ENCODE measurements at regions of chr17 and their contacts with region 1.

Region 1: GRCh38 chr17:74212913-74213791 is at the start of gene TTYH2:
- DNase-seq: peak; percentile 93
- ATAC-seq: peak; percentile 65
- H3K4me3 ChIP-seq: peak within 1 kb of the TSS; percentile 72
- H3K27ac ChIP-seq: peak within 1 kb of the TSS; percentile 48
- H3K4me1 ChIP-seq: peaks cover 36% of the 10 kb centered on the region
- H3K27me3 ChIP-seq: no peaks in the 10 kb centered on the region
- CTCF ChIP-seq: peak; percentile 57; the same call in 1 of the 2 replicates
- total RNA-seq, gene TTYH2: 17.6 and 21.0 TPM in 2 replicates

Region 2: DNA sequence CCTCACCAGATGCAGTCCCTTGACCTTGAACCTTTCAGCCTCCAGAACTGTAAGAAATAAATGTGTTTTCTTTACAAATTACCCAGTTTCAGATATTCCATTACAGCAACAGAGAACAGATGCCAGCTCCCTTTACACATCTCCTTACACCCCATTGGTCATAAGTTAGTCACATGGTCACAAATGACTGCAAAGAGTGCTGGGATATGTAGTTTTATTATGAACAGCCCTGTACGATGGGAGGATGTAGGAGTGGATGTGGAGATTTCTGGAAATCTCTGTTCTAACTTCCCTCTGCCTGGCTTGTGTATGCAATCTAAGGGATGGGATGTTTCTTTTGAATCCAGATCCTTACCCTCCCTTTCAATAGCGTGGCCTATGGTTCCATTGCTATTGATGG is 23.0 kb before region 1 on chr17:
- CTCF ChIA-PET with region 1: no interaction called
- POLR2A ChIA-PET with region 1: interaction called, 18 read pairs
- intact Hi-C with region 1: no loop called
- DNase-seq: peak; percentile 50
- ATAC-seq: peak; percentile 44; the same call in 1 of the 2 replicates
- H3K4me3 ChIP-seq: no peak overlapping the region
- H3K27ac ChIP-seq: no peak overlapping the region
- H3K4me1 ChIP-seq: peaks cover 5% of the 10 kb centered on the region; the same call in 1 of the 2 replicates
- H3K27me3 ChIP-seq: peaks cover 27% of the 10 kb centered on the region
- CTCF ChIP-seq: no peak

Region 3: DNA sequence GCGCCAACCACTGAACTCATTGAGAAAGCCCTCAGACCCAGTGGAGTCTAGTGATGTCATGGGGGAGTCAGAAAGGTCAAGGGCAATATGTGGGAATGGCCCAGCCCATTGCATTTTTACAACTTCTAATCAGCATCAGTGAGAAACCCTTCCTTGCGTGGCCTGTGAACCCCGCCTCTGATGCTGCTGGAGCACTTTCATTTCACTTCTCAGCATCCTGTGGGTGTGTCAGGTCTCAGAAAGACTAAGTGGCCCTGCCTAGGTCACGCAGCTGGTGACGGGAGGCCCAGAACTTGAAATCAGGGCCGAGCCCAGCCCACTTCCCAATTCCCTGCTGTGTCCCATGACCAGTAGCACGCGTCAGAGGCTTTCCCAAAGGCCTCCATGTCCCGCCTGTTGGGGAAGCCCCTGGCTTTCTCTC is 67.0 kb after region 1 on chr17:
- CTCF ChIA-PET with region 1: interaction called, 7 read pairs
- POLR2A ChIA-PET with region 1: no interaction called
- intact Hi-C with region 1: loop called (anchors 5 kb)
- DNase-seq: no peak
- ATAC-seq: no peak
- H3K4me3 ChIP-seq: no peak overlapping the region
- H3K27ac ChIP-seq: no peak overlapping the region
- H3K4me1 ChIP-seq: peaks cover 13% of the 10 kb centered on the region
- H3K27me3 ChIP-seq: no peaks in the 10 kb centered on the region
- CTCF ChIP-seq: no peak

Region 4: DNA sequence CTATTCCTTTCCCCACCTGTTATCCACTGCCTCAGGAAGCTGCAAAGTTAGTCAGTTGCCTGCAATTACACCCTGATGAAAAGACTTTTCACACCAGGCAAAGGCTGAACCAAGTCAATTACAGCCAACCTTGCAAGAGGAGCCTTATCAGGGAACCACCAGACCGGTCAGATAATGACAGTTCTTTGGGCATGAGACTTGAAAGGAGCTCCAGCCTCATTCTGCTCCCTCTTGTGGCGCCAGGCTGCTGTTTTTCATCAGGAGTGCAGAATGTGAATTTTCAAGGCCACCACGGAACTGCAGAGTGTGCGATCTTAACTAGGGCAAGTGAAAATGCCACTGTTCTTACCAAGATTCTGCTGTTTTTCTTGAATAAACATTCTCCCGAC is 83.4 kb after region 1 on chr17:
- CTCF ChIA-PET with region 1: interaction called, 13 read pairs
- POLR2A ChIA-PET with region 1: no interaction called
- intact Hi-C with region 1: loop called (anchors 1 kb)
- DNase-seq: peak; percentile 67
- ATAC-seq: peak; percentile 68
- H3K4me3 ChIP-seq: no peak overlapping the region
- H3K27ac ChIP-seq: no peak overlapping the region
- H3K4me1 ChIP-seq: peaks cover 21% of the 10 kb centered on the region
- H3K27me3 ChIP-seq: no peaks in the 10 kb centered on the region
- CTCF ChIP-seq: peak; percentile 83

Region 5: GRCh38 chr17:74361230-74362068 is 148.3 kb after region 1 on chr17 and contains the start of gene BTBD17:
- CTCF ChIA-PET with region 1: interaction called, 3 read pairs
- POLR2A ChIA-PET with region 1: no interaction called
- intact Hi-C with region 1: loop called (anchors 5 kb)
- DNase-seq: peak; percentile 68
- ATAC-seq: peak; percentile 91
- H3K4me3 ChIP-seq: no peak within 1 kb of the TSS
- H3K27ac ChIP-seq: no peak within 1 kb of the TSS
- H3K4me1 ChIP-seq: no peaks in the 10 kb centered on the region
- H3K27me3 ChIP-seq: peaks cover 66% of the 10 kb centered on the region
- CTCF ChIP-seq: peak; percentile 94
- total RNA-seq, gene BTBD17: not detected in 2 replicates

Region 6: DNA sequence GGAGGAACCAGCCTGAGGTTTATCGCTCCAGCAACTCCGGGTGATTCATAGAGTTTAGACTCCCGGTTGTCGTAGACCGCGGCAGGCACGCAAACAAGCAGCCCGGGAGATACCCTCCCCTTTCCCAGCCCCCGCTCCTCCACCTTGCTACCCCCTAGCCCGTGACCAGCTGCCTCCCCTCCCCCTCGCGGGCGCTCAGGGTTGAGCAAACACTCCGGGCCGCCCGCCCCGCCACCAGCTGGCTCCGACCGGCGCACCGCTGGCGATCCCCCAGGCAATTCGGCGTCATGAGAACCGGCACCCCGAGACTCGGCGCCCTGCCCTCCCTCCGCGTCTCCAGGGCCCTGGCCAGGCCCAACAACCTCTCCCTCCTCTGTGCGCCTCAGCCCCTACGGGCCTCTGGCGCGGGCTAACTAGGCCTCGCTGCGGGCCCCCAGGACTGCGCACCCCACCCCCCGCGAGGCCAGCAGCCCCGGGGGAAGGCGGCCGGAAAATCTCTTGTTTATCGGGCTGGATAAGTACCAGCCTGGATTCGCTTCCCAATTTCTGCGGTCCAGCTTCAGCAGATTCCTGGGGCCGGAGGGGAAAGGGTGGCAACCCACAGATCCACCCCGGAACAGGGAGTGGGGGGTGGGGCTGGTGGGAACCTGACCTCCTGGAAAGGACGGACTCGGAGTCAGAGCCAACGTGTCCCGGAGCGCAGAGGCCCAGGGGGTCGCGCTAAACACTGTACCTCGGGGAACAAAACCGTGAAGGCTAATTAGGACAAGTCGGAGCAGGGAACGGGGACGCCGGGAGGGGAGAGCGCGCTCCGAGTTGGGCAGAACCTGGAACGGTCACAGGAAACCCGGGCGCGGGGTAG is 217.8 kb after region 1 on chr17:
- CTCF ChIA-PET with region 1: no interaction called
- POLR2A ChIA-PET with region 1: no interaction called
- intact Hi-C with region 1: loop called (anchors 5 kb)
- DNase-seq: peak; percentile 97
- ATAC-seq: peak; percentile 57
- H3K4me3 ChIP-seq: peak overlapping the region; percentile 80
- H3K27ac ChIP-seq: peak overlapping the region; percentile 99
- H3K4me1 ChIP-seq: peaks cover 54% of the 10 kb centered on the region
- H3K27me3 ChIP-seq: no peaks in the 10 kb centered on the region
- CTCF ChIP-seq: no peak